ENCODE measurements at regions of chr11 and their contacts with region 1.

Region 1: GRCh38 chr11:63768237-63769043 is at the start of gene ZFTA:
- DNase-seq: peak; percentile 34 to 79 (median 54)
- ATAC-seq: peak; percentile 84
- H3K4me3 ChIP-seq: peak within 1 kb of the TSS; percentile 77
- H3K4me3 Mint-ChIP-seq: peak within 1 kb of the TSS; percentile 87 to 99 (median 92)
- H3K27ac ChIP-seq: peak within 1 kb of the TSS; percentile 60
- H3K27ac Mint-ChIP-seq: peak within 1 kb of the TSS; percentile 34 to 94 (median 83)
- H3K4me1 ChIP-seq: peaks cover 6 to 9% of the 10 kb centered on the region in 2 donors
- H3K4me1 Mint-ChIP-seq: peaks cover 6 to 14% (median 8%) of the 10 kb centered on the region in 7 donors
- H3K27me3 ChIP-seq: peaks cover 0 to 9% of the 10 kb centered on the region in 2 donors
- H3K27me3 Mint-ChIP-seq: peaks cover 0 to 35% (median 9%) of the 10 kb centered on the region in 5 donors
- total RNA-seq, gene ZFTA: 2.1 to 3.6 (median 2.7) TPM

Region 2: GRCh38 chr11:62771144-62772021 is 997.1 kb before region 1 on chr11 and contains the start of gene TAF6L:
- CTCF ChIA-PET with region 1: no interaction called
- POLR2A ChIA-PET with region 1: no interaction called
- intact Hi-C with region 1: no loop called
- DNase-seq: peak; percentile 80 to 98 (median 82)
- ATAC-seq: peak; percentile 92
- H3K4me3 ChIP-seq: peak within 1 kb of the TSS; percentile 66
- H3K4me3 Mint-ChIP-seq: peak within 1 kb of the TSS; percentile 88 to 98 (median 94)
- H3K27ac ChIP-seq: peak within 1 kb of the TSS; percentile 82
- H3K27ac Mint-ChIP-seq: peak within 1 kb of the TSS; percentile 89 to 97 (median 94)
- H3K4me1 ChIP-seq: peaks cover 10 to 13% of the 10 kb centered on the region in 2 donors
- H3K4me1 Mint-ChIP-seq: peaks cover 17 to 37% (median 27%) of the 10 kb centered on the region in 7 donors
- H3K27me3 ChIP-seq: no peaks in the 10 kb centered on the region
- H3K27me3 Mint-ChIP-seq: no peaks in the 10 kb centered on the region
- total RNA-seq, gene TAF6L: 13.1 to 34.9 (median 24.1) TPM

Region 3: GRCh38 chr11:63548178-63548577 is 220.3 kb before region 1 on chr11:
- CTCF ChIA-PET with region 1: no interaction called
- POLR2A ChIA-PET with region 1: no interaction called
- intact Hi-C with region 1: no loop called
- DNase-seq: no peak
- ATAC-seq: no peak
- H3K4me3 ChIP-seq: no peak overlapping the region
- H3K4me3 Mint-ChIP-seq: peak overlapping the region in 2 of 10 donors; percentile 1 to 8
- H3K27ac ChIP-seq: no peak overlapping the region
- H3K27ac Mint-ChIP-seq: peak overlapping the region in 7 of 9 donors; percentile 22 to 78 (median 65)
- H3K4me1 ChIP-seq: peaks cover 16 to 19% of the 10 kb centered on the region in 2 donors
- H3K4me1 Mint-ChIP-seq: peaks cover 14 to 60% (median 48%) of the 10 kb centered on the region in 7 donors
- H3K27me3 ChIP-seq: no peaks in the 10 kb centered on the region
- H3K27me3 Mint-ChIP-seq: no peaks in the 10 kb centered on the region

Region 4: GRCh38 chr11:63614136-63614664 is 154.2 kb before region 1 on chr11 and contains the start of gene PLAAT3:
- CTCF ChIA-PET with region 1: no interaction called
- POLR2A ChIA-PET with region 1: no interaction called
- intact Hi-C with region 1: no loop called
- DNase-seq: peak in 7 of 9 donors; percentile 11 to 41 (median 16)
- ATAC-seq: peak; percentile 70
- H3K4me3 ChIP-seq: peak within 1 kb of the TSS; percentile 75
- H3K4me3 Mint-ChIP-seq: peak within 1 kb of the TSS; percentile 82 to 89 (median 86)
- H3K27ac ChIP-seq: peak within 1 kb of the TSS; percentile 35
- H3K27ac Mint-ChIP-seq: peak within 1 kb of the TSS in 8 of 9 donors; percentile 52 to 74 (median 62)
- H3K4me1 ChIP-seq: peaks cover 0 to 3% of the 10 kb centered on the region in 2 donors
- H3K4me1 Mint-ChIP-seq: peaks cover 0 to 26% (median 12%) of the 10 kb centered on the region in 7 donors
- H3K27me3 ChIP-seq: no peaks in the 10 kb centered on the region
- H3K27me3 Mint-ChIP-seq: peaks cover 0 to 31% (median 0%) of the 10 kb centered on the region in 5 donors
- total RNA-seq, gene PLAAT3: 0.92 to 10.3 (median 2.0) TPM

Region 5: DNA sequence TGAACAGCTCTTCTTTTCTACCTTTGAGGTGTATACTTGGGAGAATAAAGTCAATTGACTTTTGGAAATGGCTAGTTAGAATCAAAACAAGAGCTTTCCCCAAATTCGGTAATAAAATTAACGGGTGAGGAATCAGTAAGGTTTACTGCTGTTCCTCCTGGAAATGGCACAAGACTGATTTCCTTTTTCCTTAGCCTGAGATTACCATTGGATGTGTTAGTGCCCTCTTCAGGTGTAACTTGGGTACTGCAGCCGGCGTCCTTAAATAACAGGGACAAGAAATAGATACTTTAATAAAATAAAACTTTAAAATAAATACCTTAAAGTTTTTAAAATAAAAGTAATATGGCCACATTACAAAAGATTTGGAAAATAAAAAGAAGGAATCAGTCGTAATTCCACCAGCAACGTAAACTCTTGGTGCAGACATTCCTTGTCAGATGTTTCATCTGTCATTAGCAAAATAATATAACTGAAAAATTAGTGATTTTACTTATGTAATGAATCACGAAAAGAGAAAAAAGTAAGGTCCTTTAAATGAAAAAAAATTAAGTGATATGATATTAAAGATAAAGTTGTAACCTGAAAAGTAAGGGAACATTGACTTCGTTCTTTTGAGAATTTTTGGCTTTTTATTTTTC is 29.6 kb before region 1 on chr11:
- CTCF ChIA-PET with region 1: no interaction called
- POLR2A ChIA-PET with region 1: no interaction called
- intact Hi-C with region 1: no loop called
- DNase-seq: peak in 8 of 9 donors; percentile 23 to 64 (median 46)
- ATAC-seq: peak; percentile 70
- H3K4me3 ChIP-seq: no peak overlapping the region
- H3K4me3 Mint-ChIP-seq: no peak overlapping the region
- H3K27ac ChIP-seq: no peak overlapping the region
- H3K27ac Mint-ChIP-seq: peak overlapping the region in 3 of 9 donors; percentile 29 to 67 (median 45)
- H3K4me1 ChIP-seq: no peaks in the 10 kb centered on the region
- H3K4me1 Mint-ChIP-seq: peaks cover 3 to 8% (median 4%) of the 10 kb centered on the region in 7 donors
- H3K27me3 ChIP-seq: no peaks in the 10 kb centered on the region
- H3K27me3 Mint-ChIP-seq: no peaks in the 10 kb centered on the region

Region 6: DNA sequence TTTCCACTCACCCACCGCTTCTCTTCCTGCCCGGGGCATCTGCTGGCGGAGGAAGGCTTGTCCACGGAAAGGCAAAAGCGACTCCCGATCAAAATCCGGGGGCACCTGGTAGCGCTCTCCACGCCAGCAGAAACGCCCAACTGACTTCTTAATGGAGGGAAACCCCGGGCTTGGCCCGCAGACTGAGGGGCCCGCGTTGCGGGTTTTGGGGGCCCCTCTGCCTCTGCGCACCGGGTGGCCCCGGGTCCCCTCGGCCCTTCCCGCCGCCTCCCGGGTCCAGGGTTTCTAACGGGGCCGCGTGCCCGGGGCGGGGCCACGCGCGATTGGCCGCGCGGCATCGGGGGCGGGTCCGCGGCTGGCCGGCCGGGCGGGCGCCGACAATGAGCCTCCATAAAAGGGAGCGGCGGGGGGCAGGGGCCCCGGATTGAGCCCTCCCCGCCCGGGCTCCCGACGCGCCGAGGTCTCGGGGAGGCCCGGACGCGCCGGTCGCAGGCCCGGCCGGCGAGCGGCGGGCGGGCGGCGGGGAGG is 44.7 kb after region 1 on chr11 and contains the start of gene SPINDOC:
- CTCF ChIA-PET with region 1: interaction called, 3 read pairs
- POLR2A ChIA-PET with region 1: no interaction called
- intact Hi-C with region 1: loop called (anchors 2 to 5 kb)
- DNase-seq: peak; percentile 17 to 90 (median 36)
- ATAC-seq: peak; percentile 94
- H3K4me3 ChIP-seq: peak within 1 kb of the TSS; percentile 65
- H3K4me3 Mint-ChIP-seq: peak within 1 kb of the TSS; percentile 71 to 86 (median 80)
- H3K27ac ChIP-seq: peak within 1 kb of the TSS; percentile 69
- H3K27ac Mint-ChIP-seq: peak within 1 kb of the TSS in 7 of 9 donors; percentile 5 to 63 (median 29)
- H3K4me1 ChIP-seq: peaks cover 4 to 6% of the 10 kb centered on the region in 2 donors
- H3K4me1 Mint-ChIP-seq: peaks cover 6 to 32% (median 21%) of the 10 kb centered on the region in 7 donors
- H3K27me3 ChIP-seq: no peaks in the 10 kb centered on the region
- H3K27me3 Mint-ChIP-seq: no peaks in the 10 kb centered on the region
- total RNA-seq, gene SPINDOC: 6.6 to 42.2 (median 9.3) TPM